ENCODE measurements at regions of chr10 and their contacts with region 1.

Region 1: GRCh38 chr10:69883310-69884023 is 81.8 kb downstream of the COL13A1 start:
- DNase-seq: peak; percentile 55
- H3K4me3 Mint-ChIP-seq: no peak overlapping the region
- H3K27ac Mint-ChIP-seq: no peak overlapping the region
- H3K4me1 Mint-ChIP-seq: peaks cover 10% of the 10 kb centered on the region
- H3K27me3 Mint-ChIP-seq: peaks cover 94% of the 10 kb centered on the region
- CTCF ChIP-seq: peak; percentile 45

Region 2: GRCh38 chr10:69861251-69862240 is 21.9 kb before region 1 on chr10:
- CTCF ChIA-PET with region 1: interaction called, 11 read pairs
- intact Hi-C with region 1: no loop called
- DNase-seq: peak; percentile 80
- H3K4me3 Mint-ChIP-seq: peak overlapping the region; percentile 38
- H3K27ac Mint-ChIP-seq: peak overlapping the region; percentile 96
- H3K4me1 Mint-ChIP-seq: peaks cover 58% of the 10 kb centered on the region
- H3K27me3 Mint-ChIP-seq: peaks cover 5% of the 10 kb centered on the region
- CTCF ChIP-seq: peak; percentile 68

Region 3: DNA sequence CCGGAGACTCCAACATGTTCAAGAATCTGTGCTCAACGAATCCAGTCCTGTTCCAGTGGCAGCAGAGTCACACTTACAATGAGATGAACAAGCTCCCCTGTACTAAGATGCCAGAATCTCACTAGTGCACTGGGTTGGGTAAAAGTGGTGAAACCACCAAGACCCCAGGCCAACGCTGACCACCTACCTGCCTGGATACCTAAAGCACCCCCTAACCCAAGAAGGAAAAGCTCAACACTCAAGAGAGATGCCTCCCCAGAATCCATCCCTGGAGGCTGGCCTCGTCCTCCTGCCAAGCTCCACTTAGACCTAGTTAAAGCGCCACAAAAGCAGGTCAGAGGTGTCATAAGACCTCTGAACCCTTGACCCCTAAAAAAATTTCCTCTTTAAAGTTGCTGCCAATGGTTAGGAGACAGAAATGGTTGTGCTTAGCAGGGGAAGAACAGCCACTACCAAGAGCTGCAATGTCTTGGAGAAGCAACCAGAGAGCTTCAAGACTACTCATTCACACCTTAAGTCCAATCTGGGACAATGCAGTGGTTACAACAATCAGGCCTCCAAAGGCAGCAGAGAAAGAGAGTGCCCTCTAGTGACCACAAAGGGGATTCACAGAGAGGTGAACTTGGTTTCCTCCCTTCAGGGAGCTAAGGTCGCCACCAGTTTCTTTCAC is 74.6 kb after region 1 on chr10:
- CTCF ChIA-PET with region 1: interaction called, 14 read pairs
- intact Hi-C with region 1: no loop called
- DNase-seq: peak; percentile 56
- H3K4me3 Mint-ChIP-seq: no peak overlapping the region
- H3K27ac Mint-ChIP-seq: no peak overlapping the region
- H3K4me1 Mint-ChIP-seq: peaks cover 6% of the 10 kb centered on the region
- H3K27me3 Mint-ChIP-seq: peaks cover 79% of the 10 kb centered on the region
- CTCF ChIP-seq: peak; percentile 86